Activated T-helper 2 cell treated with anti-CD3 and anti-CD28 coated beads, Interferon-gamma antibody, Interleukin-2, Interleukin-4, amounts not matched to agents 10 μg/mL and 5 μg/mL and 100 μg/mL, durations not matched to agents 14 hours and 24 hours and 36 hours (primary cell): ENCODE measurements at regions of chr22 and their contacts with region 1.

Region 1: DNA sequence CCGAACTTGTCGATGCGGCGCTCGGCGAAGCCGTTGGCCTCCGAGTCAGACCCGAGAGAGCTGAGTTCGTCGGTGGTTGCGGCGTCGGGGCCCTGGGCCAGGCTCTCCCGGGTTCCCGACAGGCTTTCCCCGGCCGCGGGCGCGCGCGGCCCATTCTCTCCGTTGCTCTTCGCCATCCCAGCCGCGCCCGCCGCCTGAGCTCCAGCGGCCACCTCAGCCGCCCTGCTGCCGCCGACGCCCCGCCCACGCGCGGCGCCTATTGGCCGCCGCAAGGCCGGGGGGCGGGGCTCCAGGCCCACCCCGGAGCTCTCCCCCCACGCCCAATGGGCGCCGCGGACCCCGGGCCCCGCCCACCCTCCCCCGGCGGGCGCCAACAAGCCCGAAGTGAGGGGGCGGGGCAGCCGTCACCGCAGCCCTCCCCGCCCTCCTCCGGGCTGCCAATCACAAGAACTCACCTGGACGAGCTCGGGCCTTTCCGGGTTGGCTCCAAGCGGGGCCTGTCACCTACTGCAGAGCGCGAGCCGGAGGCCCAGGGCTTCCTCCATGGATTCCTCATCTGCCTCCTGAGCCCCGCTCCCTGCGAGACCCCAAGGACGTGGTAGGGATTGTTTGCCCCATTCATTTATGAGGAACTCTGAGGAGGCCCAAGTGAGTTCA is at the start of gene TBC1D10A:
- DNase-seq: peak; percentile 91
- H3K4me3 Mint-ChIP-seq: peak within 1 kb of the TSS; percentile 76
- H3K27ac Mint-ChIP-seq: peak within 1 kb of the TSS; percentile 75
- H3K4me1 Mint-ChIP-seq: peaks cover 47% of the 10 kb centered on the region
- H3K27me3 Mint-ChIP-seq: no peaks in the 10 kb centered on the region
- total RNA-seq, gene TBC1D10A: 26.8 and 29.4 TPM in 2 replicates

Region 2: GRCh38 chr22:30305519-30305905 is 21.3 kb before region 1 on chr22:
- intact Hi-C with region 1: loop called (anchors 1 kb)
- DNase-seq: peak; percentile 65
- H3K4me3 Mint-ChIP-seq: peak overlapping the region; percentile 70
- H3K27ac Mint-ChIP-seq: peak overlapping the region; percentile 87
- H3K4me1 Mint-ChIP-seq: peaks cover 89% of the 10 kb centered on the region
- H3K27me3 Mint-ChIP-seq: no peaks in the 10 kb centered on the region

Region 3: DNA sequence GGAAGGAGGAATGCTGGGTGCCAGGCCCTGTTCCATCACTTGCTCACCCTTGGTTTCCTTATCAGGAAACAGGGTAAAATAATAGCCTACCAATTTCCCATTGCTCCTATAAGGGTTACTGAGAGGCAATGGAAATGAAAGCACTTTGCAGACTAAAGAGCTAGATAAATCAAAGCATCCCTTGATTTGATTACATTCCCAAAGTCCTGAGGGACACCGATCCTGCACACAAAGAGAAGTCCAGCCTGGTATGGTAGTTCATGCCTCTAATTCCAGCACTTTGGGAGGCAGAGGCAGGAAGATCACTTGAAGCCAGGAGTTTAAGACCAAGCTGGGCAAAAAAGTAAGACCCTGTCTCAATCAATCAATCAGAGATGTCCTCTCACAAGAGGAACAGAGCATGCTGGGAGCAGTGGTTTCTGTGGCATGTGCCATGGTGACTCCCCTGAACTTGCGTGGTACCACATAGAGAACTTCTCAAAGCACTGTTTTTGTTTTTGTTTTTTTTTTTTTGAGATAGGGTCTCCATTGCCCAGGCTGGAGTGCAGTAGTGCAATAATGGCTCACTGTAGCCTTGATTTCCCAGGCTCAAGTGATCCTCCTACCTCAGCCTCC is 10.8 kb before region 1 on chr22:
- intact Hi-C with region 1: no loop called
- DNase-seq: no peak
- H3K4me3 Mint-ChIP-seq: no peak overlapping the region
- H3K27ac Mint-ChIP-seq: peak overlapping the region; percentile 75
- H3K4me1 Mint-ChIP-seq: peaks cover 88% of the 10 kb centered on the region
- H3K27me3 Mint-ChIP-seq: no peaks in the 10 kb centered on the region

Region 4: GRCh38 chr22:30356449-30357235 is 29.8 kb after region 1 on chr22 and contains the starts of genes CCDC157 and SF3A1:
- intact Hi-C with region 1: loop called (anchors 2 kb)
- DNase-seq: peak; percentile 86
- H3K4me3 Mint-ChIP-seq: peak within 1 kb of the TSS; percentile 91
- H3K27ac Mint-ChIP-seq: peak within 1 kb of the TSS; percentile 89
- H3K4me1 Mint-ChIP-seq: peaks cover 34% of the 10 kb centered on the region
- H3K27me3 Mint-ChIP-seq: peaks cover 2% of the 10 kb centered on the region
- total RNA-seq, gene CCDC157: 3.2 and 4.3 TPM in 2 replicates
- total RNA-seq, gene SF3A1: 287 and 325 TPM in 2 replicates